ENCODE measurements at regions of chr14 and their contacts with region 1.

Region 1: DNA sequence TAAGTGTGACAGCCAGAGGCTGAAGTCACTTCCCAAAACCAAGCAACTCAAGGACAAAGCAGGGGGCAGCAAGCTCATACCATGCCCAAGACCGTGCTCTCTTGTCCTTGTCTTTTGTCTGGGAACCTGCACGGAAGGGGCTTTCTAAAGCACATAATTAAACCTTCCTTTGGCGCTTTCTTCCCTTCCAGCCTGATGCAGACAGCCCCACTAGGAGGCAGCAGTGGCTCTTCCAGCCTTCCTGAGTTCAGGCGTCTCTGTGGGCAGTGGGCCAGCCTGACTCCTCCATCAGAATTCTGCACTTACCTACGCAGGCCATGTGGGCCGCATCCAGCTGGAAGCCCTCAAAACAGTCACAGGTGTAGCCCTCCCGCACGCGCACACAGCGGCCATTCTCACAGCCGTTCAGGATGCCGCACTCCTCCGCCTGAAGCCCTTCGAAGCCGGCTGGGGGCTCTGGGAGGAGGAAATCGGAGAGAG is 7.6 kb downstream of the ISCA2 start:
- DNase-seq: no peak
- H3K4me3 ChIP-seq: no peak overlapping the region
- H3K27me3 ChIP-seq: no peaks in the 10 kb centered on the region
- CTCF ChIP-seq: peak; percentile 92

Region 2: DNA sequence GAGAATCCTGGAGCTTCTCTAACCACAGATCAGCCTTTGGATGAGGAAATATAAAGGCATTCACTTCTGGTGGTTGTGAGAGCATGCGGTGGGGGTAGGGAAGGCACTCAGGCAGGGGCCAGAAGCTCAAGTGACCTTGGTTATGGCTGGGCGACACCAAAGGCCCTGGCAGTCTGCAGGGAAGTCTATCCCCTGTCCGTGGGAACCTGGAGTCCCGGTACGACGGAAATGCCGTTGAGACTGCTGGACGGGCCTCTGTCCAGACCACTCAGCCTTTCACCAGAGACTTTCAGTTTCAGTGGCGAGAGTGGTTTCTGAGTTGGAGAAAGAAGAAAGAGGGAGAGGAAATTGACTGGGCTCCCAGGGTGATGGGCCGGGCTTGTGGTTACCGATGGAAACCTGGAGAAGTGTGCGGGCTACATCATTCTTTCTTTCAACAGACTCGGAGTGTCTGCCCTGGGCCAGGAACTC is 13.3 kb after region 1 on chr14:
- CTCF ChIA-PET with region 1: interaction called, 16 read pairs
- POLR2A ChIA-PET with region 1: no interaction called
- DNase-seq: no peak
- H3K4me3 ChIP-seq: no peak overlapping the region
- H3K27me3 ChIP-seq: no peaks in the 10 kb centered on the region
- CTCF ChIP-seq: no peak

Region 3: DNA sequence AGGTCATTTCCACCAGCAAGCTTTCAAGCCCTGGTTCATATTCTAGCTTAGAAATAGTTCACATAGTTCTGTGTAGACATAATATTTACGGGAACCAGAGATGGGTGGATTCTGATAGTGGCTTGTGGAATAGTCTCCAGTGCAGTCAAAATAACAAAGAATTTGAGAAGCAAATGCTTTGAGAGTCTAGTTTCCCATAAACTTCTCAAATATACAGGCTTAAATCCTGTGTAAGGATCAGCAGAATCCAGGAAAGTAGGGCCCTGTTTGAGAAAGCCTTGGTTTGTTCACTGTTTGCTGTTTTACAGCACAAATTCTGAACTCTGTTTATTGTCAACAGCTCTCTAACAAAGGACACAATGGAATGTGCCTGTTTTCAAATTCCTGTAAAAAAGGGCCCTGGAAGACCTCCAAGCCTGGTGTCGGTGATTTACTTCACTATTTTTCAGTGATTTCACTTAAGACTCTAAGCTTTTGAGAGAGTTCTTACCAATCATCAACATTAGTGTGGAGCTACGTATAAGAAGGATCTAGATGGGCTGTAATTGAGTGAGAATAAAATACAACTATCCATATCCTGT is 766.1 kb after region 1 on chr14:
- CTCF ChIA-PET with region 1: no interaction called
- POLR2A ChIA-PET with region 1: no interaction called
- DNase-seq: peak; percentile 81
- H3K4me3 ChIP-seq: no peak overlapping the region
- H3K27me3 ChIP-seq: peaks cover 2% of the 10 kb centered on the region; the same call in 1 of the 2 replicates
- CTCF ChIP-seq: no peak